Lower leg skin (tissue), 4 donors: ENCODE measurements at regions of chr9 and their contacts with region 1.

Region 1: GRCh38 chr9:35675732-35676392 is 2.1 kb downstream of the CA9 start:
- DNase-seq: no peak
- H3K4me3 ChIP-seq: peak overlapping the region; percentile 1
- CTCF ChIP-seq: no peak
- POLR2A ChIP-seq: no peak

Region 2: DNA sequence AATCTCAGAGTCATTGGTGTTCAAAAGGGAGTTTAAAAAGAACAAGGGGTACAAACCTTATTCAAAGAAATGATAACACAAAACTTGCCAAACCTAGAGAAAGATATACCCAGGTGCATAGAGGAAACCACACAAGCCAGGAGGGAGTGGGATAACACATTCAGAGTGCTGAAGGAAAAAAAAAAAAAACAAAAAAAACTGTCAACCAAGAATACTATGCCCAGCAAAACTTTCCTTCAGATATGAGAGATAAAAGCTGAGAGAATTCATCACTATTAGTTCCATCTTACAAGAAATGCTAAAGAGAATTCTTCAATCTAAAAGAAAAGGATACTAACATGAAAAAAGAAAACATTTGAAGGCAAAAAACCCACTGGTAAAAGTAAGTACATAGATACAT is 82.3 kb before region 1 on chr9:
- intact Hi-C with region 1: no loop called
- DNase-seq: no peak
- H3K4me3 ChIP-seq: no peak overlapping the region
- CTCF ChIP-seq: no peak
- POLR2A ChIP-seq: no peak

Region 3: DNA sequence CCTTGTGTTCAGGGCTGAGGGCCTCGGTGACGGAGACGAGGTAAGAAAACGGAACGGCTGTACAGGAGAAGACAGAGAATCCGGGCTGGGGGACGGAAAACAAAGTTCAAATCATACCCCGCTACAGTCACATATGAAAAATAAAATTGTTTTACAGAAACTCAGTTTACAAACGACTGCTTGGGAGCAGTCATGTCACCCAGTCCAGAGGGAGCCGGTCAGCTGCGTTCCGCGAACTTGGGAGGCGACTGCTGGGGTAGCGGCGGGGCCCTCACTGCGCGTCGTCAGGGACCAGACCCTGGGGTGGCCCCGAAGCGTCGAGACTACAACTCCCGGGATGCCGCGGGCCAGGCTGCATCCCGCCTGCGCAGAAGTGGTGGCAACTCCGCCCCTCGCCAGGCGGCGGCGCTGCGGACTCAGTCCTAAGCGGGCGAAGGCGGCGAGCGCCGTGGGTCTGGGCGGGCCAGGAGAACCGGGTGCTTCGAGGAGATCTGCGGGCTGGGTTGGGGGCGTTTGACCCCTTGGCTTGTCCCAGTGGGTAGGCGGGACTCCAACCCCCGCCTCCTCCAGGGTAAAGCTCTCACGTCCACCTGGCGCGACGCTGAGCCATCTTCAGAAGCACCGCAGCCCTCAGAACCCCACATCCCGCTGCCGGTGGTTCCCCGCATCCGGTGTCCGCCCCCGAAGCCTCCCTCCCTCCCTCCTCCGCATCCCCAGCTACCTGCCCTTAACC is 29.2 kb before region 1 on chr9:
- intact Hi-C with region 1: loop called (anchors 1 kb)
- DNase-seq: peak; percentile 94 to 99
- H3K4me3 ChIP-seq: peak overlapping the region; percentile 11
- CTCF ChIP-seq: peak in 1 of 3 donors; percentile 93
- POLR2A ChIP-seq: peak in 1 of 2 donors; percentile 69

Region 4: DNA sequence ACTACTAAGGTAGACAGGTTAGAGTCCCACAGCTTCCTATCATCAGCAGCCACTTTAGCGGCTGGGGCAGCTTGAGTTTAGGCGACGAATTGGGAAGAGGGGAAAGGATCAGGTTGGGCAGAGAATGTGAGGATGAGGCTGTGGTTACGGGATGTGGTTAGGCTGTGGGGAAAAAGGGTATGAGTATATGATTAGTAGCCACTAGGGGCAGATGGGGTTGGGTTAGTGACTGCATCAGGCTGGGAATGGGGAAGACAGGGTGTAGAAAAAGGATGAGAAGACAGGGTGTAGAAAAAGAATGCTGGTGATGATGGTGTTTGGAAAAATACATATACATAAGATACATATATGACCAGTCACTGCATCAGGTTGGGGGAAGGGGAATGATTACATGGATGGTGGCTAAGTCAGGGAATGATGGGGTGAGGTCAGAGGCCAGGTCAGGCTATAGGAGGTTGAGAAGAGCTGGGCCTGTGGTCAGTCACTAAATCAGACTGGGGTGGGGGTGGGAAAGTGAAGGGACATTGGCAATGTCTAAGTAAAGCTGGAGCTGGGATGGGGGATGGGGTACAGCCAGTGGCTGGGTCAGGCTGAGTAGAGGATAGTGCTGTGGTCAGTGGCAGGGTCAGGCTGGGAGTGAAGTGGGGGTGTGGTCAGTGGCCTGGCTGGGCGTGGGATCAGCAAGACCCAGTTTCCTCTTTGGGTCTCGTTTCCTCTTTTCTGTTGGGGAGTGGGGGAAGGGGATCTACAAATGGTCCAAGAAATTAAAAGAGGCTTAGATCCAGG is 54.0 kb after region 1 on chr9:
- intact Hi-C with region 1: loop called (anchors 10 kb)
- DNase-seq: peak in 1 of 2 donors; percentile 49
- H3K4me3 ChIP-seq: no peak overlapping the region
- CTCF ChIP-seq: no peak
- POLR2A ChIP-seq: no peak

Region 5: DNA sequence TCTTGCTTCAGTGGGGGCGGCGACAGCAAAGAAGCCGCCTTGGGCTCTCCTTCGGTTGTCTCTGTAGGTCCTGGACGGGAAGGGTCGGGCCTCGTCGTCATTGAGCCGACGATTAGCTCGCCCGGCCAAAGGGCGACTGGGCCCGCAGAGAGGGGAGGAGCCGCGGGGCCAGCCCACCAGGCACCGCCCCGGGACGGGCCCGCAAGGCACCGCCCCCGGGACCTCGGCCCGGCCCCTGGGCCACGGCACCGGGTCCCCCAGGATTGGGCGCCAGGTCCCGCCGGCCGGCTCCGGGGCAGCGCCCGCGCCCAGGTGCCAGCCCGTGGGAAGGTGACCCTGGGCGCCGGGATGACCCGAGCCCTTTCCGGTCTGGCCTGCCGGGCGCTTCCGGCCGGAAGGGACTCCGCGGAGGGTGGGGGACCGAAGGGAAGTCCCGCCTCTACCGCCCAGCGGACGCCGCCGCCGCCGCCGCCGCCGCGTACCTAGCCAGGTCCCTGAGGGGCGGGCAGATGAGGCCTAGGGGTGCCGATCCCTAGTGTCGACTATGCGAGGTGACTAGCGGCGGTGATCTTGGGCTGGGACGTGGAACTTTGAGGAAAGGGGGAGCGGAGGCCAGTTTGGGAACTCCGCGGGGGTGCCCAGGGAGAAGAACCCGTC is 73.1 kb after region 1 on chr9 and contains the starts of genes GBA2 and RGP1:
- intact Hi-C with region 1: no loop called
- DNase-seq: peak in 1 of 2 donors; percentile 94
- H3K4me3 ChIP-seq: peak within 1 kb of the TSS; percentile 80
- CTCF ChIP-seq: no peak
- POLR2A ChIP-seq: no peak
- total RNA-seq, gene GBA2: 53.7 to 83.3 (median 65.0) TPM
- total RNA-seq, gene RGP1: 17.1 to 26.4 (median 22.1) TPM